ENCODE measurements at regions of chr16 and their contacts with region 1.

Region 1: DNA sequence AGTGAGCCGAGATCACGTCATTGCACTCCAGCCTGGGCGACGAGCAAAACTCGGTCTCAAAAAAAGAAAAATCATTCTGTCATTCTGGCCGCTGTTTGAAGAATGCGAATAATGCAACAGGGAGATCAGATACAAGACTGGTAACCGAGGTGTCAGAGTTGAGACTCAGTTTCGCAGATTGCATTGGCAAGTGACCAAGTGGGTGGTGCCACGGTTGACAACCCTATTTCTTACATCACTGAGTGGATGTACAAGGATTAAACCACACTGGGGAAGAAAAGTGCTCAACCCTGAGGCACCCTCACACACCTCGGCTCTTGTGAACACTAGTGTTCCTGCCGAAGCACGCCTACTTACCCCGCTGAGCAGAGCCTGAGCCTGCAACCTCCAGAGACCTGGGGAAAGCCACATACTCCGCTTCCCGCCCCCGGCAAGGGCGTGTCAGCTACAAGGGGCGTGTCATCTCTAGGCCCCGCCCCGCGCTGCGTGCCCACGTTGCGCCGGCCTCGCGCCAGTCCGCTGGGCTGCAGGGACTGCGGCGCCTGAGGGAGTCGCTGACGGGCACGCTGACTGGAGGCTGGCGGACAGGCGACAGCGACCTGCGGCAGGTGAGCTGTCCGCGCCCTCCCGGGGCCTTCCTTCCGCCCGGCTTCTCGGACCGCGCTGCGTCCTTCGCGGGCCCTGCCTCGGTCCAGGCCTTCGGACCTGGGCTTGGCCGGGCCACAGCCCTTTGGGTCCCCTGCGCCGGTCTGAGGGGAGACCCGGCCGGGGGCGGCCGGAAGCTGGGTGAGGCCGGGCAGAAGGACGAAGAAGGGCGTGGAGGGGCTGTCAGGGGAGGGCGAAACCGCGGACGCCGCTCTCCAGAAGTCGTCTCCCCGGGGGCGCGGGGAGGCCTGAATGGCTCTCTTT is at the start of gene HMOX2:
- DNase-seq: peak; percentile 90 to 95 (median 92)
- H3K4me3 ChIP-seq: peak within 1 kb of the TSS; percentile 86 to 91
- H3K4me3 Mint-ChIP-seq: peak within 1 kb of the TSS; percentile 92 to 95 (median 94)
- H3K27ac ChIP-seq: peak within 1 kb of the TSS; percentile 76
- H3K27ac Mint-ChIP-seq: peak within 1 kb of the TSS; percentile 90 to 96 (median 95)
- H3K4me1 ChIP-seq: peaks cover 60% of the 10 kb centered on the region
- H3K4me1 Mint-ChIP-seq: peaks cover 26 to 55% (median 38%) of the 10 kb centered on the region in 4 donors
- H3K27me3 ChIP-seq: no peaks in the 10 kb centered on the region
- H3K27me3 Mint-ChIP-seq: no peaks in the 10 kb centered on the region
- total RNA-seq, gene HMOX2: 64.1 to 72.4 TPM

Region 2: GRCh38 chr16:4425378-4426020 is 50.6 kb before region 1 on chr16 and contains the start of gene DNAJA3:
- CTCF ChIA-PET with region 1: no interaction called
- POLR2A ChIA-PET with region 1: interaction called, 6 read pairs
- intact Hi-C with region 1: loop called (anchors 2 kb)
- DNase-seq: peak; percentile 93 to 96 (median 95)
- H3K4me3 ChIP-seq: peak within 1 kb of the TSS; percentile 98 to 99
- H3K4me3 Mint-ChIP-seq: peak within 1 kb of the TSS; percentile 92 to 98 (median 98)
- H3K27ac ChIP-seq: peak within 1 kb of the TSS; percentile 98
- H3K27ac Mint-ChIP-seq: peak within 1 kb of the TSS; percentile 98 to 100 (median 100)
- H3K4me1 ChIP-seq: peaks cover 28% of the 10 kb centered on the region
- H3K4me1 Mint-ChIP-seq: peaks cover 16 to 36% (median 24%) of the 10 kb centered on the region in 4 donors
- H3K27me3 ChIP-seq: no peaks in the 10 kb centered on the region
- H3K27me3 Mint-ChIP-seq: no peaks in the 10 kb centered on the region
- total RNA-seq, gene DNAJA3: 67.5 to 71.1 TPM

Region 3: DNA sequence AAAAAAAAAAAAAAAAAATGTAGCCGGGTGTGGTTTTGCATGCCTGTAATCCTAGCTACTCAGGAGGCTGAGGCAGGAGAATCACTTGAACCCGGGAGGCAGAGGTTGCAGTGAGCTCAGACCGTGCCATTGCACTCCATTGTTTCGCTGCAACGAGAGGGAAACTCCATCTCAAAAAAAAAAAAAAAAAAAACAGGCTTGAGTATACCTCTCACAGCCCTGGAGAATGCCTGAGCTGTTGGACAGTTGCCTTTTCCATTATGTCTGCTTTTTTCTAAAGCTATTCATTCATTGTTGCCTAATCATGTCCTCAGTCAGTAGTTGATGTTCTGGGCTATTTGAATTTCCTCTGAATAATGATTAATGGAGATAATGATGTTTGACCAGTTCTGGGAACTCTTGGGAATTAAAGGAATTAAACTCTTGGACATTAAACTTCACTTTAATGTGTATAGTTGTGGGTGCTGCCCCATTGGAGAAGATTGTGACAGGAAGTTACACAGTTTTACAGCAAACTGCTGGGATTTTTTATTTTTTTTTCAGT is 11.9 kb after region 1 on chr16:
- CTCF ChIA-PET with region 1: interaction called, 38 read pairs
- POLR2A ChIA-PET with region 1: interaction called, 103 read pairs
- intact Hi-C with region 1: loop called (anchors 1 kb)
- DNase-seq: peak in 3 of 5 donors; percentile 40 to 54 (median 42)
- H3K4me3 ChIP-seq: peak overlapping the region in 1 of 2 donors; percentile 33
- H3K4me3 Mint-ChIP-seq: peak overlapping the region; percentile 56 to 91 (median 81)
- H3K27ac ChIP-seq: peak overlapping the region; percentile 50
- H3K27ac Mint-ChIP-seq: peak overlapping the region; percentile 81 to 98 (median 97)
- H3K4me1 ChIP-seq: peaks cover 84% of the 10 kb centered on the region
- H3K4me1 Mint-ChIP-seq: peaks cover 36 to 70% (median 57%) of the 10 kb centered on the region in 4 donors
- H3K27me3 ChIP-seq: no peaks in the 10 kb centered on the region
- H3K27me3 Mint-ChIP-seq: no peaks in the 10 kb centered on the region

Region 4: DNA sequence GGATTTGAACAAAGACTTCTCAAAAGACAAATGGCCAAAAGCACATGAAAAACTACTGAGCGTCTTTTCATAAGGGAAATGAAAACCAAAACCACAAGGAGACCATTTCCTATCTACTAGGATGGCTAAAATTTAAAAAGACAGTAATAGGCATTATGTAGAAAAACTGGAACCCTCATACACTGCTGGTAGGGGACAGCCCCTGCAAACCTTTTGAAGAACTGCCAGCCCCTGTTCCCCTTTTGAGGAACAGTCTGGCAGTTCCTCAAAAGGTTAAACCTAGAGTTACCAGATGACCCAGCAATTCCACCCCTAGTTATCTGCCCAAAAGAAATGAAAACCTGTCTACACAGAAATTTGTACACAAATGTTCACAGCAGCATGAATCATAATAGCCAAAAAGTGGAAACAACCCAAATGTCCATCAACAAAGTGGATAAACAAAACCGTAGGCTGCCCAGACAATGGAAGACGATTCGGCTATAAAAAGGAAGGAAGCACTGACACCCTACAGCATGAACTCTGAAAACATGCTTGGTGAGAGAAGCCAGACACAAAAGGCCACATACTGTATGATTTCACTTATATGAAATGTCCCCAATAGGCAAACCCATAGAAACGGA is 39.6 kb after region 1 on chr16:
- CTCF ChIA-PET with region 1: interaction called, 343 read pairs
- POLR2A ChIA-PET with region 1: interaction called, 12 read pairs
- intact Hi-C with region 1: no loop called
- DNase-seq: peak in 1 of 5 donors; percentile 32
- H3K4me3 ChIP-seq: peak overlapping the region in 1 of 2 donors; percentile 11
- H3K4me3 Mint-ChIP-seq: peak overlapping the region; percentile 42 to 85 (median 76)
- H3K27ac ChIP-seq: peak overlapping the region; percentile 50
- H3K27ac Mint-ChIP-seq: peak overlapping the region; percentile 88 to 95 (median 94)
- H3K4me1 ChIP-seq: peaks cover 39% of the 10 kb centered on the region
- H3K4me1 Mint-ChIP-seq: peaks cover 33 to 70% (median 49%) of the 10 kb centered on the region in 4 donors
- H3K27me3 ChIP-seq: no peaks in the 10 kb centered on the region
- H3K27me3 Mint-ChIP-seq: no peaks in the 10 kb centered on the region

Region 5: GRCh38 chr16:4550591-4550990 is 74.5 kb after region 1 on chr16:
- CTCF ChIA-PET with region 1: interaction called, 50 read pairs
- POLR2A ChIA-PET with region 1: interaction called, 17 read pairs
- intact Hi-C with region 1: loop called (anchors 2 kb)
- DNase-seq: no peak
- H3K4me3 ChIP-seq: no peak overlapping the region
- H3K4me3 Mint-ChIP-seq: no peak overlapping the region
- H3K27ac ChIP-seq: no peak overlapping the region
- H3K27ac Mint-ChIP-seq: peak overlapping the region in 2 of 7 donors; percentile 46 to 88
- H3K4me1 ChIP-seq: peaks cover 6% of the 10 kb centered on the region
- H3K4me1 Mint-ChIP-seq: peaks cover 4 to 7% (median 5%) of the 10 kb centered on the region in 4 donors
- H3K27me3 ChIP-seq: no peaks in the 10 kb centered on the region
- H3K27me3 Mint-ChIP-seq: no peaks in the 10 kb centered on the region

Measured in CD4-positive, alpha-beta memory T cell (primary cell).